Heart right ventricle (tissue), 16 donors: ENCODE measurements at regions of chr19 and their contacts with region 1.

Region 1: DNA sequence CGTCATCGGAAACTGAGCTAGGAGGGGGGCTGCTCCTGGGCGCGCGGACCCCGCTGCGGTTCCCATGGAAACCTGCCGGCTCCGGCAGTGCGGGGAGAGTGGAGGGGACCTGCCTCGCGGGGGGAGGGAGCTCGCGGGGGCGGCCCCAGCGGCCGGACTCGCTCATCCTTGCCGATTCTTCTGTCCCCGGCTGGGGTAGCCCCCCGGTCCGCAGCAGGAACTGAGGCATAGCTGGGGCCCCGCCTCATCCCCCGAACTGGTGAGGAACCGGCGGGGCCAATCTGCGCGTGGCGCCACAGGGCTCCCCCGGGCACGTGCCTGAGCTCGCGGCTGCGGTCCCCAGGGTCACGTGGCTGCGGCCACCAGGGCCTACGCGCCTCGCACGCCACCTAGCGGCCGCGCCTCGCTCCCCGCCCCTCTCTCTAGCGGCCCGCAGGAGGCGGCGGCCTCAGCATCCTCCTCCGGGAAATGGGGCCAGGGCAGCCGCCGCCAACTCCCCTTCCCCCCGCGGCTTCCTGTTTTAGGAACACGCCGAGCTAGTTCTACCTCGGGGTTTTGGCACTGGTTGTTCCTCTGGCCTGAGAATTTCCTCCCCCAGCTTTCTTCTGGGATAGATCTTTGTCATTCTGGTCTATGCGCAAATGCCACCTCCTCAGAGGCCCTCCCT is 1.7 kb upstream of the ELAVL3 start:
- DNase-seq: peak; percentile 72 to 87
- ATAC-seq: peak; percentile 87 to 95 (median 91)
- H3K4me3 ChIP-seq: peak overlapping the region; percentile 6 to 50 (median 40)
- H3K27ac ChIP-seq: peak overlapping the region in 1 of 10 donors; percentile 14
- H3K4me1 ChIP-seq: peaks cover 10 to 46% (median 35%) of the 10 kb centered on the region in 9 donors
- H3K27me3 ChIP-seq: peaks cover 5 to 63% (median 52%) of the 10 kb centered on the region in 7 donors
- CTCF ChIP-seq: peak; percentile 81 to 97 (median 93)

Region 2: DNA sequence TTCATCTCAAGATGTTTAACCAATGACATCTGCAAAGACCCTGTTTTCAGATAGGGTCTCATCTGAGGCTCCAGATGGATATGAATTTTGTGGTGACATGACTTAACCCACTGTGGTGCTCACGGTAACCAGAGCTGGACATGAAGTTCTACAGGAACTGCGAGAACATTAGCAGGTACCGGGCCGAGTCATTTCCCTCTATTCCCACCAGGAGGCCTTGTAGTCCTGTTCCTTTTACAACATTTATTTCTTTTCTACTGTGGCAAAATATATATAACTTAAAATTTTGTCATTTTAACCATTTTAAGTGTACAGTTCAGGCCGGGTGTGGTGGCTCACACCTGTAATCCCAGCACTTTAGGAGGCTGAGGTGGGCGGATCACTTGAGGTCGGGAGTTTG is 194.2 kb before region 1 on chr19:
- intact Hi-C with region 1: loop called in 6 of 10 experiments (anchors 5 to 10 kb)
- DNase-seq: no peak
- ATAC-seq: no peak
- H3K4me3 ChIP-seq: no peak overlapping the region
- H3K27ac ChIP-seq: peak overlapping the region in 1 of 10 donors; percentile 76
- H3K4me1 ChIP-seq: peaks cover 0 to 34% (median 18%) of the 10 kb centered on the region in 9 donors
- H3K27me3 ChIP-seq: peaks cover 0 to 5% (median 0%) of the 10 kb centered on the region in 7 donors
- CTCF ChIP-seq: peak in 7 of 9 donors; percentile 23 to 51 (median 37)

Region 3: DNA sequence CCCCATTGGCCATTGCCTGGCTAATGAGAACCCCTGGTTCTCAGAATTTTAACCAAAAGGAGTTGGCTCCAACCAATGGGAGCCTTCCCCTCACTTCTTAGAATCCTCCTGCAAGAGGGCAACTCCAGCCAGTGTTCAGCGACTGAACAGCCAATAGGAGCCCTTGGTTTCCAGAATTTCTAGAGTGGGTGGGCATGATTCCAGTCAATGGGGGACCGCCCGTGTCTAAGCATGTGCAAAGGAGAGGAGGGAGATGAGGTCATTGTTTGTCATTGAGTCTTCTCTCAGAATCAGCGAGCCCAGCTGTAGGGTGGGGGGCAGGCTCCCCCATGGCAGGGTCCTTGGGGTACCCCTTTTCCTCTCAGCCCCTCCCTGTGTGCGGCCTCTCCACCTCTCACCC is 117.6 kb before region 1 on chr19:
- intact Hi-C with region 1: no loop called
- DNase-seq: no peak
- ATAC-seq: peak in 2 of 8 donors; percentile 16 to 32
- H3K4me3 ChIP-seq: no peak overlapping the region
- H3K27ac ChIP-seq: peak overlapping the region in 2 of 10 donors; percentile 35 to 36
- H3K4me1 ChIP-seq: peaks cover 0 to 9% (median 0%) of the 10 kb centered on the region in 9 donors
- H3K27me3 ChIP-seq: no peaks in the 10 kb centered on the region
- CTCF ChIP-seq: no peak

Region 4: GRCh38 chr19:11380653-11381534 is 101.6 kb before region 1 on chr19:
- intact Hi-C with region 1: loop called in 1 of 10 experiments (anchors 5 kb)
- DNase-seq: peak; percentile 93 to 97
- ATAC-seq: peak; percentile 88 to 94 (median 92)
- H3K4me3 ChIP-seq: peak overlapping the region; percentile 36 to 87 (median 65)
- H3K27ac ChIP-seq: peak overlapping the region; percentile 47 to 87 (median 80)
- H3K4me1 ChIP-seq: peaks cover 20 to 71% (median 52%) of the 10 kb centered on the region in 9 donors
- H3K27me3 ChIP-seq: peaks cover 0 to 24% (median 9%) of the 10 kb centered on the region in 7 donors
- CTCF ChIP-seq: peak; percentile 60 to 89 (median 77)

Region 5: GRCh38 chr19:11435058-11435832 is 47.3 kb before region 1 on chr19 and contains the starts of genes ODAD3 and PRKCSH:
- intact Hi-C with region 1: loop called in 1 of 10 experiments (anchors 1 kb)
- DNase-seq: peak; percentile 98 to 99
- ATAC-seq: peak; percentile 98 to 99 (median 98)
- H3K4me3 ChIP-seq: peak within 1 kb of the TSS; percentile 50 to 87 (median 78)
- H3K27ac ChIP-seq: peak within 1 kb of the TSS; percentile 53 to 86 (median 80)
- H3K4me1 ChIP-seq: peaks cover 8 to 23% (median 20%) of the 10 kb centered on the region in 9 donors
- H3K27me3 ChIP-seq: no peaks in the 10 kb centered on the region
- CTCF ChIP-seq: peak; percentile 60 to 95 (median 89)
- total RNA-seq, gene ODAD3: 0.17 to 0.64 (median 0.34) TPM in 9 of 10 donors, not detected in the other
- total RNA-seq, gene PRKCSH: 106 to 177 (median 123) TPM

Region 6: GRCh38 chr19:11505032-11505503 is 22.6 kb after region 1 on chr19:
- intact Hi-C with region 1: loop called in 1 of 10 experiments (anchors 1 kb)
- DNase-seq: peak; percentile 97 to 98
- ATAC-seq: peak; percentile 94 to 97 (median 96)
- H3K4me3 ChIP-seq: peak overlapping the region; percentile 70 to 100 (median 98)
- H3K27ac ChIP-seq: peak overlapping the region; percentile 93 to 99 (median 96)
- H3K4me1 ChIP-seq: peaks cover 0 to 16% (median 11%) of the 10 kb centered on the region in 9 donors
- H3K27me3 ChIP-seq: no peaks in the 10 kb centered on the region
- CTCF ChIP-seq: no peak

Region 7: DNA sequence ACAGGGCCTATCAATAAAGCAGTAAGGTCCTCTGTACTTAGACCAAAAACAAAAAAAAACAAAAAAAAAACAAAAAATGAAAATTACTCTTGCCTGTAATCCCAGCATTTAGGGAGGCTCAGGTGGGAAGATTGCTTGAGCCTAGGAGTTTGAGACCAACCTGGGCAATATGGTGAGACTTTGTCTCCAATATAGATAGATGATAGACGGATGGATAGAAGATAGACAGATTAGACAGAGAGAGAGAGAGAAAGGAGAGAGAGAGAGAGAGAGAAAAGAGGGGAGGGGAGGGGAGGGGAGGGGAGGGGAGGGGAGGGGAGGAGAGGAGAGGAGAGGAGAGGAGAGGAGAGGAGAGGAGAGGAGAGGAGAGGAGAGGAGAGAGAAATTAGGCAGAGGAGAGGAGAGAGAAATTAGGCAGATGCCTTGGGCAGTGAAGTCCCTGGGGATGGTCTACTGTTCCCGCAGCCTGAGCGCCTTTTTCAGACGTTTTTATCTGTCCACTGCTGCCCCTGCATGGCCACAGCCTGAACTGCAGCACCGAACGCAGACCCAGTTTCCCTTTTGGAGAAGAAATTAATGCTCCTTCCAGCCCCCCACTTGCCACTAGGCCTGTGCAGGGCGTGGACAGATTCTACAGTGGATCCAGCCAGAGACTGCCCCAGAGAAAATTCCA is 104.9 kb after region 1 on chr19:
- intact Hi-C with region 1: no loop called
- DNase-seq: peak; percentile 74 to 81
- ATAC-seq: peak; percentile 78 to 91 (median 86)
- H3K4me3 ChIP-seq: no peak overlapping the region
- H3K27ac ChIP-seq: no peak overlapping the region
- H3K4me1 ChIP-seq: peaks cover 0 to 18% (median 0%) of the 10 kb centered on the region in 9 donors
- H3K27me3 ChIP-seq: no peaks in the 10 kb centered on the region
- CTCF ChIP-seq: peak; percentile 75 to 91 (median 83)